ENCODE measurements at regions of chr4 and their contacts with region 1.

Region 1: GRCh38 chr4:112231779-112232713 is at the start of gene AP1AR:
- DNase-seq: peak; percentile 92
- H3K4me3 ChIP-seq: peak within 1 kb of the TSS; percentile 87
- H3K27ac ChIP-seq: peak within 1 kb of the TSS; percentile 86
- H3K4me1 ChIP-seq: peaks cover 36% of the 10 kb centered on the region
- CTCF ChIP-seq: peak; percentile 74
- total RNA-seq, gene AP1AR: 18.2 and 24.9 TPM in 2 replicates

Region 2: GRCh38 chr4:112099701-112100297 is 132.2 kb before region 1 on chr4:
- CTCF ChIA-PET with region 1: interaction called, 8 read pairs
- POLR2A ChIA-PET with region 1: interaction called, 9 read pairs
- intact Hi-C with region 1: loop called (anchors 1 kb)
- DNase-seq: peak; percentile 63
- H3K4me3 ChIP-seq: no peak overlapping the region
- H3K27ac ChIP-seq: no peak overlapping the region
- H3K4me1 ChIP-seq: no peaks in the 10 kb centered on the region
- CTCF ChIP-seq: peak; percentile 97

Region 3: DNA sequence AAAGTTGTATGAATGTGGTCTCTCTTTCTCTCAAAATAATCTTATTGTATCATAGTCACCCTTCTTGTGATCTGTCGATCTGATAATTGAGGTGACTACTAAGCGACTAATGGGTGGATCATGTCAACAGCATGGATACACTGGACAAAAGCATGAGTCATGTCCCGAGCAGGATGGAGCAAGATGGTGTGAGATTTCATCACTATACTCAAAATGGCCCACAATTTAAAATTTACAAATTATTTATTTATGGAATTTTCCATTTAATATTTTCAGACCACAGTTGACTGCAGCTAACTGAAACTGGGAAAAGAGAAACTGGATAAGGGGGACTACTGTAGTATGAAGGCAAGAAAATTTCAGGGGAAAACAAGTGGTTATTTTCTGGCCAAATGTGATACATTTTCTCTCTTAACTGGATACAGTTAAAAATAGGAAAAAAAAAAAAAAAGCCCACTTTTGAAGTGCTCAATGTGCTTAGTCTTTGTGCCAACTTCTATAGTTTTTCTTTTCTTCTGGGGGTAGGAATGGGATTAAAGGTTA is 61.5 kb before region 1 on chr4:
- CTCF ChIA-PET with region 1: no interaction called
- POLR2A ChIA-PET with region 1: interaction called, 3 read pairs
- intact Hi-C with region 1: loop called (anchors 2 kb)
- DNase-seq: peak; percentile 38
- H3K4me3 ChIP-seq: peak overlapping the region; percentile 39
- H3K27ac ChIP-seq: peak overlapping the region; percentile 39
- H3K4me1 ChIP-seq: peaks cover 65% of the 10 kb centered on the region
- CTCF ChIP-seq: no peak

Region 4: DNA sequence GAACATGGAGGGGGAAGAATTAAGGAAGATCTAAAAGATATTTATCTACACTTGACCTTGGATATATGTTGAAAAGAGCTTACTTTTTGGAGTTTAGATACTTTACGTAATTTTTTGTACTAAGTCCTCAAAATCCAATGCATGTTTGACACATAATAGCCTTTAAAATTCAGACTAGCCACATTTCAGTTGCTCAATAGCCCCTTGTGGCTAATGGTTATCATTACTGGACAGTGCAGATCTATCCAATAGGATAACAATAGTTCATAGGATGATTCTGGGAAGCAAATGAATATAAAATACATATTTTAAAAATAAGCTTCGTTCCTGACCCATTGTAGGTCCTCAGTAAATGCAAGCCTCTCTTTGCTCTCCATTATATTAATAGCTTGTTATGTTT is 13.3 kb after region 1 on chr4:
- CTCF ChIA-PET with region 1: no interaction called
- POLR2A ChIA-PET with region 1: interaction called, 12 read pairs
- intact Hi-C with region 1: no loop called
- DNase-seq: no peak
- H3K4me3 ChIP-seq: no peak overlapping the region
- H3K27ac ChIP-seq: no peak overlapping the region
- H3K4me1 ChIP-seq: no peaks in the 10 kb centered on the region
- CTCF ChIP-seq: 0 out of 2 replicates have a peak, but pooled peaks have one; percentile 22

Region 5: DNA sequence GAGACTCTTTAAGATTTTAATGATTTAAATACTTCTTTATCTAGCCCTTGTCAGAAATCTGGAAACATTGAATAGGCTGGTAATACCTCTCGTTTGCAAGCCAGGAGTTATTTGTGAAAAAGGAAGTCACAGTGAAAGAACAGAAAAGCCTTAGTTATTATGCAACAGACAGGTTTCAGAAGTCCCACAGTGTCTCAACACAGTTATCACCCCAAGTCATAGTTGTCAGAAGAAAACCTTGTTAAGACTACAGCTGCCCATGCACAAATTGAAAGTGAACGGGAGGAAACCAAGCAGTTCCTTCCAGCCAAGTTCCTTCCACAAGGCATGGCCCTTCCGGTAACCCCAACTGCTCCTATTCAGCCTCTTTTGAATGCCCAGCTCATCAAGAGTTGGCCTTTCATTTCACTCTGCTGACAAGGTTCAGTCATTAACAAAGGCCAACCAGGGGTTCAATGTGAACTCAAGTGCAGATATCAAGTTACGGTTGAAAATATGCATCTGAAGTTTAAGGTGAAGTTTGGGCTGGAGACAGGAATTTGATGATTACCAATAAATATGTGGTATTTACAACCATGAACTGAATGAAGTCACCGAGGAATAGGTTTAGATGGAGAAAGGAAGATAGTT is 80.7 kb after region 1 on chr4:
- CTCF ChIA-PET with region 1: no interaction called
- POLR2A ChIA-PET with region 1: interaction called, 3 read pairs
- intact Hi-C with region 1: loop called (anchors 2 kb)
- DNase-seq: peak; percentile 67
- H3K4me3 ChIP-seq: peak overlapping the region; percentile 37
- H3K27ac ChIP-seq: peak overlapping the region; percentile 79
- H3K4me1 ChIP-seq: peaks cover 28% of the 10 kb centered on the region
- CTCF ChIP-seq: no peak

Region 6: DNA sequence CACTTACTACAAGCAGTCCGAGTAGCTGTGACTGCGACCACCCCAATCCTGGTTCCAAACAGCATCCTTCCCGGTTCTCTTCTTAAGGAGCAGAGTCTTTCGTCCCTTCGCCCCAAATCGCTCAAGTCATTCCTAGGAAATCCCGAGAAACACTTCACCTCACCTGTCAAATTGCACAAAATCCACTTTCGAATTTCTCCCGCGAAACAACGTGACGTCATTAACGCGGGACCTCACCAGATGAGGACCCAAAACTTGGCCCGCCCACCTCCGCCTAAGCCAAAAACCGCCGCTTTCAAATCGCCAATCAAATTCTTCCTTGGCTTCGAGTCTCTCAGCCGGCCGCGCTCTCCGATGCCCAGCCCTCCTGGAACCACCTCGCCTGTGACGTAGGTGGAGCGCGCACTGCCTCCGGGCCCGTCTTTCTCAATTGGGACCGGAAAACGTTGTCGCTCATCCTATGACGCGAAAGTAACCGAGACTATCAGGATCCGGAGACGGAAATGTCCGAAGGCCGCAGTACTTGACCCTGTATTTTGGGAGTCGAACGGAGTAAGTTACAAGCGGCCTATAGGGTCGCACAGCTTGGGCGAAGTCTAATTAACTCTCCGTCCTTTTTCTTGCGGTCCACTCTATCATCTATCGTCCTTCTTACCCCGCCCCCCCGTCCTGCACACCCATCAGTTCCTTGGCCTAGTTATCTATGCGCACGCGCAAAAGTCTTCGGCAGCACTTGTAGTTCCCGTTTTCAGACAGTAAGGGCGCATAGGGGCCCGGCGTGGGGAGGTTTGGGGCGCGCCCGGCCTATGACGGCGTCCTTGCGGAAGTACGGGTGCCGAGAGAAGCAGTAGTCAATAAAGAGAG is 404.9 kb after region 1 on chr4 and contains the starts of genes LARP7 and ZGRF1:
- CTCF ChIA-PET with region 1: no interaction called
- POLR2A ChIA-PET with region 1: no interaction called
- intact Hi-C with region 1: loop called (anchors 2 kb)
- DNase-seq: peak; percentile 99
- H3K4me3 ChIP-seq: peak within 1 kb of the TSS; percentile 88
- H3K27ac ChIP-seq: peak within 1 kb of the TSS; percentile 79
- H3K4me1 ChIP-seq: peaks cover 33% of the 10 kb centered on the region
- CTCF ChIP-seq: peak; percentile 92
- total RNA-seq, gene LARP7: 35.0 and 61.3 TPM in 2 replicates
- total RNA-seq, gene ZGRF1: 54.4 and 63.5 TPM in 2 replicates